Ascending aorta (tissue), 2 donors: ENCODE measurements at regions of chr10 and their contacts with region 1.

Region 1: GRCh38 chr10:78657163-78657861 is 411.5 kb upstream of the ZMIZ1 start:
- DNase-seq: peak in 1 of 2 donors; percentile 83
- H3K4me3 ChIP-seq: no peak overlapping the region
- H3K27ac ChIP-seq: no peak overlapping the region
- H3K4me1 ChIP-seq: no peaks in the 10 kb centered on the region
- H3K27me3 ChIP-seq: no peaks in the 10 kb centered on the region
- CTCF ChIP-seq: peak; percentile 50 to 66 (median 53)

Region 2: GRCh38 chr10:78047314-78047891 is 609.9 kb before region 1 on chr10:
- intact Hi-C with region 1: loop called (anchors 5 kb)
- DNase-seq: peak in 1 of 2 donors; percentile 92
- H3K4me3 ChIP-seq: no peak overlapping the region
- H3K27ac ChIP-seq: no peak overlapping the region
- H3K4me1 ChIP-seq: no peaks in the 10 kb centered on the region
- H3K27me3 ChIP-seq: no peaks in the 10 kb centered on the region
- CTCF ChIP-seq: peak; percentile 85 to 92 (median 86)

Region 3: DNA sequence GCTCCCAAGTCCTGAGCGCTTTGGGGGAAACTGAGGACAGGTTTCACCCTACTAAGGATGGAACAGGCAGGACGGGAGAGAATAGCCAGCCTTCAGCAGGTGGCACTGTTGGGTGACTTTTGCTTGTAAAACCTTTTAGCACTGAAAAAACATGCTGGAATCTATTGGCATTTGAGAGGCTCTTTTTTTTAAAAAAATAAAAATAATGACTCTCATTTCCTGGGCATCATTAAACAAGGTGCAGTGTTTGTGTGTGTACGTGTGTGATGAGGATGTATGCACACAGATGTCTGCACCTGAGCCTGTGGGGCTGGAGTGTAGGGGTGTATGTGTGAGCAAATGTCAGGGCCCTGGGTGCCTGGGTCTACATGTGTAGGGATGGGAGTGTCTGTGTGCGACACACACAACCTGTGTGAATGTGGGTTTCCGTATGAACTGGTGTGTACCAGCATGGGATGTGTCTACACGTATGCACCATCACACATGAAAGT is 445.7 kb before region 1 on chr10:
- intact Hi-C with region 1: loop called (anchors 5 kb)
- DNase-seq: no peak
- H3K4me3 ChIP-seq: no peak overlapping the region
- H3K27ac ChIP-seq: no peak overlapping the region
- H3K4me1 ChIP-seq: peaks cover 4 to 13% of the 10 kb centered on the region in 2 donors
- H3K27me3 ChIP-seq: no peaks in the 10 kb centered on the region
- CTCF ChIP-seq: peak; percentile 42 to 72 (median 45)

Region 4: DNA sequence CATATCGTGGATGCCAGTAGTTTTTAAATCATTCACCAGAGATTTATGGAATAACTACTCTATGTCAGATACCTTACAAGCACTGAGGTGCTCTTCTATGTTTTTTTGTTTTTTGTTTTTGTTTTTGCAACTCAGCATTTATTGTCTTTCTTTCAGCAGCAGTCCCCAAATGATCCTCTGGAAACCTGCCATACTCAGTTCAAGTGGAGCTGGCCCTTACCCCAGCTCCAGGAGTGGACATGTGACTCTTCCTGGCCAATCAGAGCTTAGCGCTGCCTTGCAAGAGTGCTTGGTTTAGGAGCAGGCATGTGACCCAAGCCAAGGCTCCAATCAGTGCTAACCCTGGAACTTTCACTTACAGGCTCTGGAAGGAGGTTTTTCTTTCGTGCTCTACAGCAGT is 54.8 kb after region 1 on chr10:
- intact Hi-C with region 1: no loop called
- DNase-seq: no peak
- H3K4me3 ChIP-seq: no peak overlapping the region
- H3K27ac ChIP-seq: no peak overlapping the region
- H3K4me1 ChIP-seq: peaks cover 0 to 2% of the 10 kb centered on the region in 2 donors
- H3K27me3 ChIP-seq: no peaks in the 10 kb centered on the region
- CTCF ChIP-seq: no peak

Region 5: GRCh38 chr10:78931321-78932053 is 274.2 kb after region 1 on chr10:
- intact Hi-C with region 1: no loop called
- DNase-seq: peak in 1 of 2 donors; percentile 72
- H3K4me3 ChIP-seq: no peak overlapping the region
- H3K27ac ChIP-seq: peak overlapping the region in 1 of 2 donors; percentile 13
- H3K4me1 ChIP-seq: no peaks in the 10 kb centered on the region
- H3K27me3 ChIP-seq: no peaks in the 10 kb centered on the region
- CTCF ChIP-seq: no peak